Right cardiac atrium (tissue), 5 donors: ENCODE measurements at regions of chr4 and their contacts with region 1.

Region 1: GRCh38 chr4:163554870-163555465 is 60.5 kb downstream of the TMA16 start:
- DNase-seq: no peak
- ATAC-seq: no peak
- H3K4me3 ChIP-seq: no peak overlapping the region
- H3K27ac ChIP-seq: no peak overlapping the region
- H3K4me1 ChIP-seq: peaks cover 2% of the 10 kb centered on the region
- H3K27me3 ChIP-seq: no peaks in the 10 kb centered on the region

Region 2: GRCh38 chr4:163681208-163681821 is 126.3 kb after region 1 on chr4:
- intact Hi-C with region 1: loop called in 1 of 4 experiments (anchors 10 kb)
- DNase-seq: no peak
- ATAC-seq: no peak
- H3K4me3 ChIP-seq: no peak overlapping the region
- H3K27ac ChIP-seq: no peak overlapping the region
- H3K4me1 ChIP-seq: no peaks in the 10 kb centered on the region
- H3K27me3 ChIP-seq: no peaks in the 10 kb centered on the region

Region 3: DNA sequence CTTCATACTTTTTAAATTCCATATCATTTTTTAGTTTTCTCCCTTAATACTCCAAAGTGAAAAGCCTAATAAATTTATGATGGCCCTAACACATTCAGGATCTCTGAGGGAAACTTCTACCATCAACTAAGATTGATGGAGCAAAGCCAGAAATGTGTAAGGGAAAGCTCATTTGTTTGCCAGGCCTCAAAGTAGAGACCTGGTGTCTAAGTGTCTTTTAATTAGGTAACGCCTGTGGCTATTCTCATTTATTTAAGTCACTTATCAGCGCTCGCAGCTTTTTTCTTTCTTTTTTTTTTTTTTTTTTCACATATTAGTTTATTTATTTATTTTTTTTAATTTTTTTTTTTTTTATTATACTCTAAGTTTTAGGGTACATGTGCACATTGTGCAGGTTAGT is 181.9 kb after region 1 on chr4:
- intact Hi-C with region 1: no loop called
- DNase-seq: no peak
- ATAC-seq: no peak
- H3K4me3 ChIP-seq: no peak overlapping the region
- H3K27ac ChIP-seq: no peak overlapping the region
- H3K4me1 ChIP-seq: no peaks in the 10 kb centered on the region
- H3K27me3 ChIP-seq: no peaks in the 10 kb centered on the region

Region 4: GRCh38 chr4:164731827-164732474 is 1177.0 kb after region 1 on chr4:
- intact Hi-C with region 1: loop called in 2 of 4 experiments (anchors 5 kb)
- DNase-seq: peak in 2 of 3 donors; percentile 17 to 41
- ATAC-seq: peak in 1 of 2 donors; percentile 39
- H3K4me3 ChIP-seq: no peak overlapping the region
- H3K27ac ChIP-seq: no peak overlapping the region
- H3K4me1 ChIP-seq: no peaks in the 10 kb centered on the region
- H3K27me3 ChIP-seq: no peaks in the 10 kb centered on the region